Mammary epithelial cell (primary cell): ENCODE measurements at regions of chr7 and their contacts with region 1.

Region 1: DNA sequence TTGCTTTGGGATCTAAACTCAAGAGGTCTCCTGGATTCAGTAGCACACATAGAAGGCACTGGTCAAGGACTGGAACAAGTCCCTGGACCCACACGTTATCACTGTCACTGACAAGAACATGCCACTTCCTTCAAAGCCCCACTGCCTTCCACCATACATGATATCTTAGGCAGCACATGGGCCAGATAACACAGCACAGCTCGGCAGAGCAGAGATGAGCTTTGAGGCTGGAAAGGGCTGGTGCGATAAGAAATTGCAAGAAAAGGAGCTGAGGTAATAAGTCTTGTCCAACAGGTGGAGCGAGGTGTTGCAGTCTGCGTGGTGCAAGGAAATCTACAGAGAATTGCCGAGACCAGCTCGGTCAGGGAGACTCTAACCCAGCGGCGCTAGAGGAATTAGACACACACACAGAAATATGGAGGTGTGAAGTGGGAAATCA is 139.8 kb upstream of the CDK13 start:
- DNase-seq: peak; percentile 31
- H3K4me3 ChIP-seq: peak overlapping the region in 1 of 3 experiments; percentile 28
- H3K27ac ChIP-seq: no peak overlapping the region
- H3K4me1 ChIP-seq: peaks cover 24% of the 10 kb centered on the region
- H3K27me3 ChIP-seq: no peaks in the 10 kb centered on the region
- CTCF ChIP-seq: peak in 1 of 2 donors; percentile 37

Region 2: GRCh38 chr7:38757931-38758330 is 1052.3 kb before region 1 on chr7:
- CTCF ChIA-PET with region 1: no interaction called
- dilution Hi-C with region 1: no loop called
- in situ Hi-C with region 1: no loop called
- intact Hi-C with region 1: no loop called
- DNase-seq: no peak
- H3K4me3 ChIP-seq: no peak overlapping the region
- H3K27ac ChIP-seq: no peak overlapping the region
- H3K4me1 ChIP-seq: no peaks in the 10 kb centered on the region
- H3K27me3 ChIP-seq: no peaks in the 10 kb centered on the region
- CTCF ChIP-seq: no peak

Region 3: GRCh38 chr7:39732837-39733804 is 77.1 kb before region 1 on chr7:
- CTCF ChIA-PET with region 1: no interaction called
- dilution Hi-C with region 1: no loop called
- in situ Hi-C with region 1: no loop called
- intact Hi-C with region 1: no loop called
- DNase-seq: peak; percentile 94
- H3K4me3 ChIP-seq: peak overlapping the region; percentile 51 to 65 (median 56)
- H3K27ac ChIP-seq: peak overlapping the region; percentile 92
- H3K4me1 ChIP-seq: peaks cover 19% of the 10 kb centered on the region
- H3K27me3 ChIP-seq: no peaks in the 10 kb centered on the region
- CTCF ChIP-seq: no peak

Region 4: DNA sequence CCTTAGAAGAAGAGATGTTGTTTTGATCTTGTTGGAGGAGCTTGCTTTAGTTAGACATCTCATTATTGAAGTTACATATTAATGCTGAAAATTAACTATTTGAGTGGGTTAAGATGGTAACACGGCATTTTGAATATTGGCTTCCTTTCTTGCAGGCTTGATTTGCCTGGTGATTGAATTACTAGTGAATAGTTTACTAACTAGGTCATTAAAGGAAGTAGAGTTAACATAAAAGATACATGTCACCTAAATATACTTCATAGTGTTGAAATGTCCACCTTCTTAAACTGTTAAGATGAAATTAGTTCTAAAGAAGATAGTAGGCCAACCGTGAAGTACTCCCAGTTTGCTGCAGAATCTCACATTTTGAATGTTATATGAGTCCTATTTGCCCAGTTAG is 305.7 kb after region 1 on chr7:
- CTCF ChIA-PET with region 1: interaction called, 29 read pairs
- dilution Hi-C with region 1: no loop called
- in situ Hi-C with region 1: no loop called
- intact Hi-C with region 1: no loop called
- DNase-seq: no peak
- H3K4me3 ChIP-seq: no peak overlapping the region
- H3K27ac ChIP-seq: no peak overlapping the region
- H3K4me1 ChIP-seq: peaks cover 5% of the 10 kb centered on the region
- H3K27me3 ChIP-seq: no peaks in the 10 kb centered on the region
- CTCF ChIP-seq: no peak